HEK293 (cell line): ENCODE measurements at regions of chr5 and their contacts with region 1.

Region 1: GRCh38 chr5:79020861-79021561 is 35.9 kb upstream of the ARSB start:
- H3K4me3 ChIP-seq: no peak overlapping the region
- H3K27ac ChIP-seq: no peak overlapping the region
- H3K4me1 ChIP-seq: peaks cover 5% of the 10 kb centered on the region
- CTCF ChIP-seq: peak; percentile 79

Region 2: DNA sequence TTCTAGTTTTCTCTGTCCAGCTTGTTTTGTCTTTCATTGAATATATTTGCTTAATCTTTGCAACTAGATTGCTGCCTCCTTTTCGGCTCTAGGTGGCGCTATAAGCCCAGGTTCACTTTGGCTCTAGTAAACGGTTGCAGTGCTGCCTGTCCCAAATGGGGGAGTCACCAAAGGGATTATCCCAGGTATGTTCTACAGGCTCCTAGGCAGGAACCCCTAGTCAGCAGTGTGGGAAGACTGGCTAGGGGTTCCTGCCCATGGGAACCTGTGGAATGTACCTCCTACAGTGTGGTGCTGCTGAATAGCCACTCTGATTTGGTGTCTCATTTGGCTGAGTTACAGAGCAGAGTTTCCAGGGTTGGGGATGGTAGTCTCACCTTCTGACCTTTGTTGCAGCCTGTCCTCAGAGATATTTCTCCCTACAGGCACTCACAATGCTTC is 121.1 kb before region 1 on chr5:
- CTCF ChIA-PET with region 1: interaction called, 122 read pairs
- POLR2A ChIA-PET with region 1: no interaction called
- H3K4me3 ChIP-seq: no peak overlapping the region
- H3K27ac ChIP-seq: no peak overlapping the region
- H3K4me1 ChIP-seq: no peaks in the 10 kb centered on the region
- CTCF ChIP-seq: 0 out of 2 replicates have a peak, but pooled peaks have one; percentile 10

Region 3: GRCh38 chr5:79005936-79006631 is 14.9 kb before region 1 on chr5:
- CTCF ChIA-PET with region 1: interaction called, 54 read pairs
- POLR2A ChIA-PET with region 1: no interaction called
- H3K4me3 ChIP-seq: no peak overlapping the region
- H3K27ac ChIP-seq: no peak overlapping the region
- H3K4me1 ChIP-seq: peaks cover 3% of the 10 kb centered on the region; the same call in 1 of the 2 replicates
- CTCF ChIP-seq: no peak

Region 4: GRCh38 chr5:79074641-79075040 is 53.6 kb after region 1 on chr5:
- CTCF ChIA-PET with region 1: interaction called, 10 read pairs
- POLR2A ChIA-PET with region 1: no interaction called
- H3K4me3 ChIP-seq: no peak overlapping the region
- H3K27ac ChIP-seq: no peak overlapping the region
- H3K4me1 ChIP-seq: no peaks in the 10 kb centered on the region
- CTCF ChIP-seq: no peak

Region 5: DNA sequence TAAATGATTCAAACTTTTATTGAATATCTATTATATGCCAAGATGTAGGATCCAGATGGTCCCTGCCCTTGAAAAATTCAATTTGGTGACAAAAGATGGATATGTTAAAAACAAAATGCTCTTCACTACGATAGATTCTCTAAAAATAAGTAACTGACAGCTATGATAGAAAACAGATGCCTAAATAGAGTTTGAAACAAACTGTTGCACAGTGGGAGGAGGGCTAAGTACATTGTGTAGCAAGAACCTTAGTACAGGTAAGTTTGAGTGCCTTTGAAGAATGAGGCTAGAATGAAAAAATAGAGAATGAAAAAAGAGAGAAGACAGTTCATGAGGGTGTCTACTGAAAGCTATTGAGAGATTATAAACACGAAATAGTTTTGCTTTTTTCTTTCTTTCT is 438.6 kb after region 1 on chr5:
- CTCF ChIA-PET with region 1: interaction called, 58 read pairs
- POLR2A ChIA-PET with region 1: no interaction called
- H3K4me3 ChIP-seq: no peak overlapping the region
- H3K27ac ChIP-seq: no peak overlapping the region
- H3K4me1 ChIP-seq: no peaks in the 10 kb centered on the region
- CTCF ChIP-seq: no peak